ENCODE measurements at regions of chr19 and their contacts with region 1.

Region 1: GRCh38 chr19:42401365-42402303 is 11.5 kb upstream of the CNFN start:
- DNase-seq: peak; percentile 85
- ATAC-seq: peak; percentile 50
- H3K4me3 ChIP-seq: peak overlapping the region in 4 of 5 experiments; percentile 45 to 67 (median 52)
- H3K4me3 Mint-ChIP-seq: peak overlapping the region; percentile 89
- H3K27ac ChIP-seq: peak overlapping the region in 1 of 2 donors; percentile 15
- H3K27ac Mint-ChIP-seq: peak overlapping the region; percentile 87
- H3K4me1 ChIP-seq: peaks cover 21 to 35% of the 10 kb centered on the region in 2 donors
- H3K4me1 Mint-ChIP-seq: peaks cover 41% of the 10 kb centered on the region
- H3K27me3 ChIP-seq: no peaks in the 10 kb centered on the region
- H3K27me3 Mint-ChIP-seq: no peaks in the 10 kb centered on the region
- CTCF ChIP-seq: peak; percentile 82

Region 2: DNA sequence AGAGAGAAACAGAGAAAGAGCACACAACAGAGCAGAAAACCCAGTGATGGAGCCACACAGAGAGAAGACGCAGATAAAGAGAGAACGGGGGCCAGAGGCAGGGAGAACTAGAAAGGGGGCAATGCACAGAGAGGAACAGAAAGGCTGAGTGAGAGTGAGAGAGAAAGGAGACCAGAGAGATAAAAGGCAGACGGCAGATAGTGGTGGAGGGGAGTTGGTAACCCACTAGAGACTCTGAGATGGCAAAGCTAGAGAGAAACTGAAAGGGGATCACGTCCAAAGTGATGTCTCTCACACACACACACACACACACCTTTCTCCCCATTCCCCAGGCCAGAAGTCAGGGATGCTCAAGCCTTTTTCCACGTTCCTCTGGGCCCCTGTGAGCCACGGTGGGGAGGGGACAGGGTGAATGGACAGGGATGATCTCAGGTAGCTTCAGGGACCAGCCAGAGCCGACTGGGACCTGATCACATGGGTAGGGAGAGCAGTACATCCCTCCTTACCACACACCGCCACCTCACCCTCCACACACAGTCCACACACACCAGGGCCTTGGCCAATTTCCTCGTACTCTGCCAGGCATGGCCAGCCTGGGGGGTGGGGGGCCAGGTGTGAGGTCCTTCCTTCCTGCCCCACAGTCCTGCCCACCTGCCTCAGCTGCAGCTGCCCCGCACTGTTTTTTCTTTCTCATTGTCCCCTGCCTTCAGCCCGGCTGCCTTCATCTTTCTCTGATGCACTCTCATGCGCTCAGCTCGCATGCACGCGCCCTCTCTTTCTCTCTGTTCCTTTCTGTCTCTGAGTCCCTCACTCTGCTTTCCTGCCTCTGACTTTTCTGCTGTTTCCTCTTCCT is 246.9 kb before region 1 on chr19:
- CTCF ChIA-PET with region 1: no interaction called
- POLR2A ChIA-PET with region 1: no interaction called
- intact Hi-C with region 1: no loop called
- DNase-seq: peak; percentile 46
- ATAC-seq: peak; percentile 66
- H3K4me3 ChIP-seq: peak overlapping the region in 1 of 5 experiments; percentile 12
- H3K4me3 Mint-ChIP-seq: peak overlapping the region; percentile 67
- H3K27ac ChIP-seq: peak overlapping the region; percentile 33 to 68
- H3K27ac Mint-ChIP-seq: peak overlapping the region; percentile 83
- H3K4me1 ChIP-seq: peaks cover 19 to 23% of the 10 kb centered on the region in 2 donors
- H3K4me1 Mint-ChIP-seq: peaks cover 27% of the 10 kb centered on the region
- H3K27me3 ChIP-seq: no peaks in the 10 kb centered on the region
- H3K27me3 Mint-ChIP-seq: no peaks in the 10 kb centered on the region
- CTCF ChIP-seq: no peak

Region 3: GRCh38 chr19:42380155-42380554 is 21.5 kb before region 1 on chr19:
- CTCF ChIA-PET with region 1: interaction called, 21 read pairs
- POLR2A ChIA-PET with region 1: no interaction called
- intact Hi-C with region 1: no loop called
- DNase-seq: no peak
- ATAC-seq: no peak
- H3K4me3 ChIP-seq: no peak overlapping the region
- H3K4me3 Mint-ChIP-seq: no peak overlapping the region
- H3K27ac ChIP-seq: no peak overlapping the region
- H3K27ac Mint-ChIP-seq: no peak overlapping the region
- H3K4me1 ChIP-seq: no peaks in the 10 kb centered on the region
- H3K4me1 Mint-ChIP-seq: no peaks in the 10 kb centered on the region
- H3K27me3 ChIP-seq: peaks cover 0 to 6% (median 0%) of the 10 kb centered on the region in 4 experiments
- H3K27me3 Mint-ChIP-seq: peaks cover 12% of the 10 kb centered on the region
- CTCF ChIP-seq: no peak

Region 4: DNA sequence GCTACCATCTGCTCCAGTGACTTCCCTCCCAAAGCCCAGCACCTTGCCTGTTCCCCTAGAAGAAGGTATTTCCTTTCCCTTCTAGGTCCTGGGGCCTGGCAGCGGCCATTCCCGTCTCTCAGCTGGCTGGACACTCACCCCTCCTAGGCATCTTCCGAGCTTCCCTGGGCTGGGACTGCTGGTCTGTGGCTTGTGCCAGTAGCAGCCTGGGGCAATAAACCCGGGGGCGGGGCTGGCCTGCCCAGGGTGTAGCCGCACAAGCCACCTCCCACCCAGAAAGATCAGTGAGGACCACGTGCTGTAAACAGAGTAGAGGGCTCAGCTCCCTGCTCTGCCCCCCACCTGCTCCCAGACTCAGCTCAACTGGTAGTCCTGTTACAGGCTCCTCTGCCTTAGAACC is 10.6 kb after region 1 on chr19:
- CTCF ChIA-PET with region 1: interaction called, 11 read pairs
- POLR2A ChIA-PET with region 1: no interaction called
- intact Hi-C with region 1: no loop called
- DNase-seq: no peak
- ATAC-seq: no peak
- H3K4me3 ChIP-seq: no peak overlapping the region
- H3K4me3 Mint-ChIP-seq: no peak overlapping the region
- H3K27ac ChIP-seq: no peak overlapping the region
- H3K27ac Mint-ChIP-seq: no peak overlapping the region
- H3K4me1 ChIP-seq: no peaks in the 10 kb centered on the region
- H3K4me1 Mint-ChIP-seq: peaks cover 3% of the 10 kb centered on the region
- H3K27me3 ChIP-seq: no peaks in the 10 kb centered on the region
- H3K27me3 Mint-ChIP-seq: no peaks in the 10 kb centered on the region
- CTCF ChIP-seq: no peak

Region 5: DNA sequence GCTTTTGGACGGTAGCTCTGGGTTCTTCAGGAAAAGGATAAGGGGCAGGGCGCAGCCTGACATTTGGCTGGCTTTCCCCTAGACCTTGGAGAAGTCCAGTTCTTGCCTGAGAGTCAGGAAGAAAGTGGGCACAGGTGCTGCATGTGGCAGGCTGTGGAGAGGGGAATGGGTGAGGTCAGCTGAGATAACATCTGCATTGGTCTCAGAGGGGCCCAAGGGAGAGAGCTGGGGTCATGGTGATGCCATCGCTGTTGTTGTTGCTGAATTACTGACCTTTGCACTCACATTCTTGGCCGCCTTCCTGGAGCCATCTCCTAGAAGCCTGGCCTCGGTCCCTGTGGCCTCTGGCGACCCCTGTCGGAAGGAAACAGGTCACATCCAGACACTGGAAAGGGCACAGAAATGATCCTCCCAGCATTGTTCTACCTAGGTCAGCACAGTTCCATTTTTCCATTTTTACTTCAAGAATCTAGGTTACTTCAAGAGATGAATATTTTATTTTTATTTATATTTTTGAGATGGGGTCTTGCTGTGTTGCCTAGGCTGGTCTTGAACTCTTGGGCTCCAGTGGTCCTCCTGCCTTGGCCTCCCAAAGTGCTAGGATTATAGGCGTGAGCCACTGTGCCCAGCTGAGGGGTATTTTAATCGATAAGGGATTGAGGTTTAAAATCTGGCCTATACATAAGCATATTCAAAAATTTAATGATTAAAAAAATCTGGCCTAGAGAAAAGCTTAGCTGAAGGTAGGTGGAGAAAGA is 32.0 kb after region 1 on chr19:
- CTCF ChIA-PET with region 1: interaction called, 7 read pairs
- POLR2A ChIA-PET with region 1: no interaction called
- intact Hi-C with region 1: loop called (anchors 1 kb)
- DNase-seq: peak; percentile 65
- ATAC-seq: peak; percentile 75
- H3K4me3 ChIP-seq: no peak overlapping the region
- H3K4me3 Mint-ChIP-seq: no peak overlapping the region
- H3K27ac ChIP-seq: no peak overlapping the region
- H3K27ac Mint-ChIP-seq: no peak overlapping the region
- H3K4me1 ChIP-seq: peaks cover 0 to 4% of the 10 kb centered on the region in 2 donors
- H3K4me1 Mint-ChIP-seq: peaks cover 6% of the 10 kb centered on the region
- H3K27me3 ChIP-seq: peaks cover 0 to under 1% (median 0%) of the 10 kb centered on the region in 4 experiments
- H3K27me3 Mint-ChIP-seq: no peaks in the 10 kb centered on the region
- CTCF ChIP-seq: peak; percentile 81

Measured in B cell (primary cell).